SK-N-SH (cell line): ENCODE measurements at regions of chr6 and their contacts with region 1.

Region 1: GRCh38 chr6:15441215-15441868 is 195.5 kb downstream of the JARID2 start:
- DNase-seq: peak; percentile 70
- H3K4me3 ChIP-seq: no peak overlapping the region
- H3K27ac ChIP-seq: no peak overlapping the region
- H3K4me1 ChIP-seq: peaks cover 22 to 46% of the 10 kb centered on the region in 2 experiments
- H3K27me3 ChIP-seq: no peaks in the 10 kb centered on the region
- CTCF ChIP-seq: peak; percentile 84
- EP300 ChIP-seq: no peak
- RAD21 ChIP-seq: peak; percentile 87

Region 2: DNA sequence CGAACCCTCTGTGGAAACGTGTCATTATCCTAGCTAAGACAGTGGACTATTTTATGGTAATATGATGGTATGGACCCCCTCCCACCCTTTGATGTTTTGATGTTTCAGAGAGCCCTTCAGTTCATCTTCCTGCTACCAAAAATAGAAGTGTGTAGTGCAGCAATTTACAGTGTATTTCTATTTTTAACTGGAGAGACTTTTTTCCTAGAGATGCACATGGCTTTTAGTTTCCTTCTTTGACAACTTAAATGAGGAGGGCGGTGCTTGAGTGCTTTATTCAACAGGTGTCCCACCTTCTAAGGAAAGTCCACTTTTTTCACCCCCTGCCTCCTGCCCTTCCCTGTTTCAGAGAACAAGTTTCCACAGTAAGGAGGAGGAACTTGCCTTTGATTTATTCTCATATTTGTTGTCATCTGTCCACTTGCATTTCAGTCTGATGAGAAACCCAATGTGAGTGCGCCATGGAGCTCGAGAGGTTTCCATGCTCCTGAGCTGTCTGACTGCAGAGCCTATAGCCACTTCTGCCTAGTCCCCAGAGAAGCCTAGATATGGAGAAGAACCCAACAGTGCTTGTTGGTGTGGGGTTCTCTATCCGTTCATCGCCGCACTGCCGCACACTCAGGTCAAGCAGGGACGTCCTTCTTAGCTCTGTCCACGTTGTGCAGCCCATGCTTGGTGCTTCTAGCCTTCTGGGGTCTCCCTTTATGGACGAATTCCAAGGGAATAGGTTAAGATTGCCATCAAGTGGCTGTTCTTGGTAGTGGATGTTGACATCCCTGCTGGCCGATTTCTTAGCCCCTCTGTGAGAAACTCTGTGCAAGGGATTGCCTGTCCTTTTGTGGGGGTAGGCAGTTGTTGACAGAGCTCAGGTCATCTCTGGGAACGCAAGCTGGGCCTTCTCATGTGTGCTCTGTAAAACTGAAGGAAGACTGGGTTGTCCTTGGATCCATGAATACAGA is 51.3 kb before region 1 on chr6:
- CTCF ChIA-PET with region 1: interaction called, 56 read pairs
- POLR2A ChIA-PET with region 1: no interaction called
- DNase-seq: peak; percentile 75
- H3K4me3 ChIP-seq: no peak overlapping the region; a peak in 1 of 4 replicates
- H3K27ac ChIP-seq: no peak overlapping the region
- H3K4me1 ChIP-seq: peaks cover 12 to 18% of the 10 kb centered on the region in 2 experiments; a peak in 2 of 4 replicates
- H3K27me3 ChIP-seq: no peaks in the 10 kb centered on the region
- CTCF ChIP-seq: peak; percentile 80
- EP300 ChIP-seq: no peak
- RAD21 ChIP-seq: peak; percentile 93

Region 3: GRCh38 chr6:15405129-15406068 is 35.9 kb before region 1 on chr6:
- CTCF ChIA-PET with region 1: interaction called, 11 read pairs
- POLR2A ChIA-PET with region 1: no interaction called
- DNase-seq: no peak
- H3K4me3 ChIP-seq: no peak overlapping the region
- H3K27ac ChIP-seq: peak overlapping the region in 1 of 2 experiments; percentile 14; a peak in 2 of 4 replicates
- H3K4me1 ChIP-seq: peaks cover 9 to 26% of the 10 kb centered on the region in 2 experiments; a peak in 3 of 4 replicates
- H3K27me3 ChIP-seq: no peaks in the 10 kb centered on the region
- CTCF ChIP-seq: no peak
- EP300 ChIP-seq: no peak
- RAD21 ChIP-seq: no peak

Region 4: GRCh38 chr6:15458021-15458459 is 16.7 kb after region 1 on chr6:
- CTCF ChIA-PET with region 1: interaction called, 17 read pairs
- POLR2A ChIA-PET with region 1: interaction called, 4 read pairs
- DNase-seq: no peak
- H3K4me3 ChIP-seq: no peak overlapping the region
- H3K27ac ChIP-seq: no peak overlapping the region
- H3K4me1 ChIP-seq: peaks cover 5 to 24% of the 10 kb centered on the region in 2 experiments; a peak in 3 of 4 replicates
- H3K27me3 ChIP-seq: no peaks in the 10 kb centered on the region
- CTCF ChIP-seq: no peak
- EP300 ChIP-seq: peak in 1 of 2 experiments; percentile 27; a peak in 1 of 4 replicates
- RAD21 ChIP-seq: no peak

Region 5: DNA sequence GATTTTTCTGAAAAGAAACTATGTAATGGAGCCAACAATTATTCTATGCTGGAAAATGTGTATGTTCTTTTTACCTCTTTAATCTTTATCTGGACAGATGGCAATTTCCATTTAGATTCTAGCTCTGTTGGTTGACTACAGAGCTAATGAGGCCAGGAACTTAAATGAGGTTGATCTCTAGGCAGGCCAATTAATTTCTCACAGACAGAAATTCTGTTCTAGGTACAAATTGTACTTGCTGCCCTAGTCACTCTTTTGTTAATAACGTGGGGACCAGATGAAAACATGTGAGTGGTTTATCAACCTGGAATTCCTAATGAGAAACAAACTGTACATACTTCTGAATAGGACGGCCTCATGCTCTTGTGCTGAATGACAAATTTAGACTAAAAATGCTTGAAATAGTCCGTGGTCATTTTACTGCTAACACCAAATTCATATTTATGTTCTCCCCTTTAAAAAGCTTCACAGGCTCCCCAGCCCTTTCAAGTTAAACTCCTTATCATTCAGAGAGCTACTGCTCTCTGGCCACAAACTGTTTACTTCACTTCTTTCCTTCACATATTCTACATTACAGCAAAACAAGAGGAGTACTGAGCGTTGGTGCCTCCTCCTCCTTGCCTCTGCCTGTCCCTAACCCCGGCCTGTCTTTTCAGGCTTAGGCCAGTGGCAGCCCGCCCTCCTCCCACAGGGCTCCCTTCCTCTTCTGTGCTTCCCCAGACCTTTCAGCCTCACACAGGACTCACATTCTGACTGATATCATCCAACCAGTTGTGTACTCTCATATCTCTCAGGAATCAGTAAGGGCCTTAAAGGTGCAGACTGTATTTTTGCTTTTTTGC is 180.1 kb after region 1 on chr6:
- CTCF ChIA-PET with region 1: interaction called, 21 read pairs
- POLR2A ChIA-PET with region 1: no interaction called
- DNase-seq: peak; percentile 52
- H3K4me3 ChIP-seq: no peak overlapping the region
- H3K27ac ChIP-seq: peak overlapping the region; percentile 9 to 74; a peak in 3 of 4 replicates
- H3K4me1 ChIP-seq: peaks cover 20 to 23% of the 10 kb centered on the region in 2 experiments; a peak in 3 of 4 replicates
- H3K27me3 ChIP-seq: no peaks in the 10 kb centered on the region
- CTCF ChIP-seq: no peak
- EP300 ChIP-seq: peak in 1 of 2 experiments; percentile 45; a peak in 2 of 4 replicates
- RAD21 ChIP-seq: peak; percentile 28